Cardiac septum (tissue), 1 donor: ENCODE measurements at regions of chr5 and their contacts with region 1.

Region 1: DNA sequence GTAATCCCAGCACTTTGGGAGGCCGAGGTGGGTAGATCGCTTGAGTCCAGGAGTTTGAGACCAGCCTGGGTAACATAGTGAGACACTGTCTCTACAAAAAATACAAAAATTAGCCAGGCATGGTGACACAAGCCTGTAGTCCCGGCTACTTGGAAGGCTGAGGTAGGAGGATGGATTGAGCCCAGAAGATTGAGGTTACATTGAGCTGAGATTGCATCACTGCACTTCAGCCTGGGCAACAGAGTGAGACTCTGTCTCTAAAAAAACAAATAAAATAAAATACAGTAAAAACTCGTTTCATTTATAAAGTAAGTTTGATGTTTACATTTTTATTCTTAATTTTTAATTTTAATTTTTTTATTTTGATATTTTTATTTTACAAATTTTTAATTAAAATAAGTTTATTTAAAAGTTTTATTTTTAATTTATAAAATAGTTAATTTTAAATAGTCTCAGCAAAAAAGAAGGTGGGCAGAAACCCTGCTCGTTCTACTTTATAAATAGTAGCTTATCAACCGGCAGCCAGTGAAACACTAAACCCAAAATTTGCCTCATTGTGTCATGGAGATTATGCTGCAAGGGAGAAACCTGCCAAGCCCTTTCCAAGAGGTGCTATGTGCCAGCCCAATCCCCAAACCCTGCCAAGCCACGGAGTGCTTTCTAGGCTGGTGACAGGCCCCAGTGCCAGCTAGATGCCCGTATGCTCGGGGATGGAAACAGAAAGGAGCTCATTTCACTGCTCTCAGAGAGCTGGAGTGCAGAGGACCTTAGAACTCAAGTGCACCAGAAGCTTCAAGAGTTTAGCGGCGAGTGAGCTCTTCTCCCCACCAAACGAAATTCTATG is 38.9 kb downstream of the SERINC5 start:
- DNase-seq: peak; percentile 89

Region 2: DNA sequence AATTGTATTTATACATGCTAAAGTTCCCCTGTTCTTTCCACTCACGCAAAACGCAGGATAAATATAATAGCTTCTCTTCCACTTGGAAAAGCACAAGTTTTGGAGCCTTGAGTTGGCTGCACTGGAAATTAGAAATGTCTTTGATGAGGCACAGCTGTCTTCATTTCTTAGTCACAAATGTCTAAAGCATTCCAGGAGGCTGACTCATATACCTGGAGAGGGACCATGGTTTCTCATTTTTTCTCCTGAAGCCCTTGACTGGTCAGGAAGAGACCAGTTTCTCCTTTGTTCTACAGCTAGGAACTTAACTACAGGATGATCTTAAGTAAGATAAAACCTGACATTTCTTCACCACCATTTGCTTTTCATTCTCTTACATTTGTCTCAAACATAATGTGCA is 242.1 kb before region 1 on chr5:
- intact Hi-C with region 1: no loop called
- DNase-seq: no peak

Region 3: DNA sequence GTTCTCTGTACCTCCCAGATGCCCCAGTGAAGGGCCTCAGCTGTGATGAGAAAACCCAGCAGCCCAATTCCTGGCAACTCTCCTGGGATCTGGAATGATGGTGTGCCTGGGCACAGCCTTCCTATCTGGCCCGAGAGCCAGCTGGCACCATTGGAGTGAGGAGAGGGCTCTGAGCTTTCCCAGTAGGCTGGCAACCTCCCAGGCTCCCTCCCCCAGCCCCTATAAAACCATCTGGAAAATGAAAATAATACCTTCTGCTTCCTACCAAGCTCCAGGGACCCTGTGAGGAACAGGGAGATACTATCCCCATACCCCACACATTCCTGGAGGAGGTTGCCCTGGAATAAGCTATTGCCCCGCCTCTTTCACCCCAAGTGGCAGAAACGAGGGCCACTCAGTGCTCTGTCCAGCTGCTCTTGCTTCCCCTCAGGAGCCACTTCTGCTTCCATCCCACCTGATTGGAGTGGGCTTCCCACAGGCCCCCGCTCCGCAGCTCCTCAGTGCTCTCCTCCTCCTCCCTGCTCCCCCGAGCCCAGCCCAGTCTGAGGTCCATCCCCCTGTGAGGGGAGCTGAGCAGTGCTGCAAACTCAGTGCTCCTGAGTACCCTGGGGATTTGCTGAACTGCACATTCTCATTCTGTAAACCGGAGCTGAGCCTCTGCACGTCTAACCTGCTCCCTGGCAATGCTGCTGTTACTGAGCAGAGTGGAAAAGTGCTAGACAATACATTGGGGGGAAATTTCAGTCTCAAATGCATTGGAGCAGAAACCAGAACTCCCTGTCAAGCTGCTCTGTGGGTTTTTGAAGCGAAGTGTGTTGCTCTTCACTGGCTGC is 107.1 kb before region 1 on chr5:
- intact Hi-C with region 1: loop called (anchors 2 kb)
- DNase-seq: peak; percentile 84

Region 4: DNA sequence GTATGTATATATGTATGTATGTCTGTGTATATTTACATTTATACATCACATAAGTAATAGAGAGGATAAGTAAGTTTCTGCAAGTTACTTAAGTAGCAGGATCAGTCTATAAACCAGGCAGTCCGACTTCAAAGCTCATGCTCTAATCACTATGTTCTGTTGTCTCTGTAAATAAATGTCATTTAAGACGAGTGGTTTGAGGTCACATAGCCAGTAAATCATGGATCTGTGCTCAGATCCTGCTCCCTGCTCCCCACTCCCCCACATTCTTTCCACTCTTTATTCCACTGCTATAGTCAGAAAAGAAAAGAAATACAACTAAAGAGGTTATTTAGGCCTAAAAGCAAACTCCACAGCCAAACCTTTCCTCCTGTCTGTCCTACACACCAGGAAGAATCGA is 51.5 kb before region 1 on chr5:
- intact Hi-C with region 1: no loop called
- DNase-seq: no peak

Region 5: DNA sequence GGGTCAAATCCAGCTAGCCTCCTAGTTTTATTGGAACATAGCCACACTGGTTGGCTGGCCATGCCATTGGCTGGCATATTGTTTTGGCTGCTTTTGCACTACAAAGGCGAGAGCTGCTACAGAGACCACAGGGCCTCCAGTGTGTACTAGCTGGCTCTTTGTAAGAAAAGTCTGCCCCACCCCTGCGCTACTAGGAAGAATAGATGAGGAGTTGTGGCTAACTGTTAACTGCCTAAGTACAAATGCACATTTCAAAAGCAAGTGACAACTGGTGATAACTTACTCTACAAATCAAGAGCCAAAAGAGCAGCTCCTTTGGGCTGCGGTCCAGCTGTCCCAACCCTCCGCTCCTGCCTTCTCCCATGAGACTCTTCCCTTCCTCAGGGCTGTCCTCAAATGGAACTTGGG is 25.0 kb before region 1 on chr5:
- intact Hi-C with region 1: loop called (anchors 2 kb)
- DNase-seq: no peak

Region 6: GRCh38 chr5:80308526-80308925 is 91.6 kb after region 1 on chr5:
- intact Hi-C with region 1: no loop called
- DNase-seq: no peak

Region 7: GRCh38 chr5:80407735-80408482 is 190.9 kb after region 1 on chr5 and contains the start of gene ZFYVE16:
- intact Hi-C with region 1: loop called (anchors 10 kb)
- DNase-seq: peak; percentile 99
- total RNA-seq, gene ZFYVE16: 50.3 TPM

Region 8: DNA sequence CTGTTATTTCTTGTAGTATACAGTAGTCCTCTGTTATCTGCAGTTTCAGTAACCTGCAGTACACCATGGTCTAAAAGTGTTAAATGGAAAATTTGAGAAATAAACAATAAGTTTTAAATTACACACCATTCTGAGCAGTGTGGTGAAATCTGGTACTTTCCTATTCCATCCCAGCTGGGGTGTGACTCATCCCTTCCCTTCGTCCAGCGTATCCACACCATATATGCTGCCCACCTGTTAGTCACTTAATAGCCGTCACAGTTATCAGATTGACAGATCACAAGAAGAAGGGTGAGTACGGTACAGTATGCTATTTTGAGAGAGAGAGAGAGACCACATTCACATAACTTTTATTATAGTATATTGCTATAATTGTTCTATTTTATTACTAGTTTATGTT is 299.9 kb after region 1 on chr5:
- intact Hi-C with region 1: no loop called
- DNase-seq: no peak